Ovary (tissue), 10 donors: ENCODE measurements at regions of chr10 and their contacts with region 1.

Region 1: DNA sequence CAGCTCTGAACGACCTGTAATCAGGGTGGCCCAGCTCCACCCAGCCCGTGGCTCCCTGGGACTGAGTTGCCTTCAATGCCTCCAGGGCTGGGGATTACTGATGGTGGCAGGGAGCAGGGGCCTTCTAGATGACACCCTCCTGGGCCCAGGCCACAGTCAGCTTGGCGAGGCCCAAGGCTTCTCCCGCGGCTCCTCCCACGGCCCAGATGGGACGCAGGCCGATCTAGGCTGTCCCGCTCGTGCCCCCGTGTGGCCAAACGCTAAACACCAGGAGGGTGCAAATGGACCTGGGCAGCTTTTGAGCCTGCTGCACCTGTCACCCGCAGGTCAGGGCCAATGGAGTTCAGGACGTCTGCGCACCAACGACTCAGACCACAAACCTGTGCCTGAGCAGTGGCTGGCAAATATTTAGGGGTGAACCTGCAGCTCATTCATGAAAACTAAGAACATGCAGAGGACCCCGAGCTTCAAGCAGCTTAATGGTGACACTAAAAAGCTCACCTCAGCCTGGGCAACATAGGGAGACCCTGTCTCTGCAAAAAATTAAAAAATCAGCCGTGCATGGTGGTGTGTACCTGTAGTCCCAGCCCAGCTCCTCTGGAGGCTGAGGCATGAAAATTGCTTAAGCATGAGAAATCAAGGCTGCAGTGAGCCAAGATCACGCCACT is 43.2 kb downstream of the ASB13 start:
- DNase-seq: peak; percentile 87 to 93 (median 90)
- H3K4me3 ChIP-seq: no peak overlapping the region
- H3K27ac ChIP-seq: peak overlapping the region in 1 of 2 donors; percentile 44
- H3K4me1 ChIP-seq: peaks cover 24% of the 10 kb centered on the region
- H3K27me3 ChIP-seq: no peaks in the 10 kb centered on the region
- CTCF ChIP-seq: peak; percentile 78 to 90 (median 87)
- EP300 ChIP-seq: no peak
- POLR2A ChIP-seq: no peak

Region 2: DNA sequence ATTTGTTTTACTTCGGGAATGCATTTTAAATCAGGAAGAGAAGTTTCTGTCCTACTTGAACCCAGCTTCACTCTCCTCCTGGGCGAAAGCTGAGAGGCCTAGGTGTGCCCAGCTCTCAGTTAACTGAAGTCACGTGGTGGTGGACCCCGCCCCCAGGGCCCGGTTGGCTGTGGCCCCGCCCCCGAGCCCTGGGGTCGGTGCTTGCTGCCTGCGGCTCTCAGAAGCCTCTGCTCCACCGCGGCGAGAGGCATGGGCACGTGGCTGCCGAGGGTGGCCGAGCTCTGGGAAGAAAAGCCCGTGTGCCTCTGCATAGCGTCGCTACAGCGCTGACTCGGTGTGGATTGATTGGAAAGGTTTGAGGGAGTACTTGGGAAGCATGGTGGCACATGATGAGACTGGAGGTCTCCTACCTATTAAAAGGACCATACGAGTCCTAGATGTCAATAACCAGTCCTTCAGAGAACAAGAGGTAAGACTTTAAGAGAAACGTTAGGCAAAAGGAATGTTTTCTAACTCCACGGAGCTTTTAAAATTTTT is 176.8 kb before region 1 on chr10:
- intact Hi-C with region 1: loop called (anchors 2 to 5 kb)
- DNase-seq: peak; percentile 95 to 98 (median 96)
- H3K4me3 ChIP-seq: peak overlapping the region; percentile 49
- H3K27ac ChIP-seq: peak overlapping the region in 1 of 2 donors; percentile 51
- H3K4me1 ChIP-seq: peaks cover 3% of the 10 kb centered on the region
- H3K27me3 ChIP-seq: no peaks in the 10 kb centered on the region
- CTCF ChIP-seq: no peak
- EP300 ChIP-seq: no peak
- POLR2A ChIP-seq: peak; percentile 86

Region 3: GRCh38 chr10:5461914-5462840 is 161.0 kb before region 1 on chr10:
- intact Hi-C with region 1: loop called in 1 of 4 experiments (anchors 5 kb)
- DNase-seq: no peak
- H3K4me3 ChIP-seq: no peak overlapping the region
- H3K27ac ChIP-seq: peak overlapping the region in 1 of 2 donors; percentile 52
- H3K4me1 ChIP-seq: peaks cover 4% of the 10 kb centered on the region
- H3K27me3 ChIP-seq: no peaks in the 10 kb centered on the region
- CTCF ChIP-seq: no peak
- EP300 ChIP-seq: no peak
- POLR2A ChIP-seq: no peak

Region 4: GRCh38 chr10:5534880-5535856 is 88.0 kb before region 1 on chr10:
- intact Hi-C with region 1: loop called in 2 of 4 experiments (anchors 5 to 10 kb)
- DNase-seq: peak in 2 of 5 donors; percentile 7 to 26
- H3K4me3 ChIP-seq: no peak overlapping the region
- H3K27ac ChIP-seq: peak overlapping the region in 1 of 2 donors; percentile 29
- H3K4me1 ChIP-seq: peaks cover 2% of the 10 kb centered on the region
- H3K27me3 ChIP-seq: no peaks in the 10 kb centered on the region
- CTCF ChIP-seq: no peak
- EP300 ChIP-seq: no peak
- POLR2A ChIP-seq: no peak

Region 5: DNA sequence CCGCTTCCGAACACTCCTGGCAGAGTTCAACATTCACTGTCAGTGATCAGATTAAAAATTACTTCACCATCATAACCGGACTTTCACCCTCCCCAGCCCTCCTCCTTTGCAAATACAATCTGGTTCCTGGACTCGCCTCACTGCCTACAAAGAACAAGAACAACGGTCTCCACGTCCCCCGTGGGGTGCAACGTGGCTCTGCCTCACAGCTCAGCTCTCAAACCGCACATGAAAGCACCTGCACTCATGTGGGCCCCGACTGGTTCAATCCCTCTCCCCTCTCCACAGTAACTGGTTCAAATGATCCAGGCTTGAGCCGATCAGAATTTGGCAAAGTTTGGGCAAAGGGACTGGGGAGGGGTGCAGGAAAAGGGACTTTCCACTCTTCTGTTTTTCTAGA is 22.2 kb after region 1 on chr10:
- intact Hi-C with region 1: loop called in 1 of 4 experiments (anchors 2 kb)
- DNase-seq: no peak
- H3K4me3 ChIP-seq: no peak overlapping the region
- H3K27ac ChIP-seq: peak overlapping the region in 1 of 2 donors; percentile 16
- H3K4me1 ChIP-seq: peaks cover 5% of the 10 kb centered on the region
- H3K27me3 ChIP-seq: no peaks in the 10 kb centered on the region
- CTCF ChIP-seq: no peak
- EP300 ChIP-seq: no peak
- POLR2A ChIP-seq: no peak

Region 6: DNA sequence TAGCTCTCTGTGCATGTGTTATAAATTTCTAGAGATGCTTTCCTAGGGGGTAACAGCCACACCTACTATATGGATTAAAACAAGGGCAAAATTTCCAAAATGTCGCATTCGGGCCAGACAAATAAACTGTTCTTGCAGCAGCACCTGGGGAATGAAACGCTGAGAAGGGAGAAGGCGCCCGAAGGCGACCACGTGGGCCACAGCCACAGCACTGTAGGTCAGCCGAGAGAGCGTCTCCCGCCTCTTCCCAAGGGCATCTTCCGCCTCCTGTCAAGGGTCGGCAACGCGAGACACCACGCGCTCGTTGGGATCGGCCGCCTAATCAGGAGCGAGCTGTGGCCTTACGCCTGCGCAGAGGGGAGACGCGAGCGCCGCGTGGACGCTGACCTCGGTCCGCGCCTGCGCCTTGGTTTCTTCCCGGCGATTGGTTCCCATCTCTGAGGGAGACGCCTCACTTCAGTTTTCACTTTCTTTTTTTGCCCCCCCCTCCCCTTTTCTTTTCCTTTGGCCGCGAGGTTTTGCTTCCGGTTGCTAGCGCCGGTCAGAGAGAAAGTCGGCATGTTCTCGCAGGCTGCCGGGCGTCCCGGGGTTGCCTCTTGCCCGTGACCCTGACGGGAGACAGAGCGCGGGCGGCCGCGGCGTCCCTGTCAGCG is 61.2 kb after region 1 on chr10 and contains the start of gene TASOR2:
- intact Hi-C with region 1: no loop called
- DNase-seq: peak; percentile 97 to 99 (median 98)
- H3K4me3 ChIP-seq: peak within 1 kb of the TSS; percentile 96
- H3K27ac ChIP-seq: peak within 1 kb of the TSS; percentile 32 to 83
- H3K4me1 ChIP-seq: peaks cover 2% of the 10 kb centered on the region
- H3K27me3 ChIP-seq: no peaks in the 10 kb centered on the region
- CTCF ChIP-seq: no peak
- EP300 ChIP-seq: no peak
- POLR2A ChIP-seq: peak; percentile 20
- total RNA-seq, gene TASOR2: 60.8 to 91.2 (median 70.0) TPM